ENCODE measurements at regions of chr11 and their contacts with region 1.

Region 1: GRCh38 chr11:6443269-6444003 is 2.6 kb upstream of the HPX start:
- DNase-seq: peak; percentile 66
- H3K4me3 Mint-ChIP-seq: no peak overlapping the region
- H3K27ac Mint-ChIP-seq: no peak overlapping the region
- H3K4me1 Mint-ChIP-seq: no peaks in the 10 kb centered on the region
- H3K27me3 Mint-ChIP-seq: no peaks in the 10 kb centered on the region

Region 2: DNA sequence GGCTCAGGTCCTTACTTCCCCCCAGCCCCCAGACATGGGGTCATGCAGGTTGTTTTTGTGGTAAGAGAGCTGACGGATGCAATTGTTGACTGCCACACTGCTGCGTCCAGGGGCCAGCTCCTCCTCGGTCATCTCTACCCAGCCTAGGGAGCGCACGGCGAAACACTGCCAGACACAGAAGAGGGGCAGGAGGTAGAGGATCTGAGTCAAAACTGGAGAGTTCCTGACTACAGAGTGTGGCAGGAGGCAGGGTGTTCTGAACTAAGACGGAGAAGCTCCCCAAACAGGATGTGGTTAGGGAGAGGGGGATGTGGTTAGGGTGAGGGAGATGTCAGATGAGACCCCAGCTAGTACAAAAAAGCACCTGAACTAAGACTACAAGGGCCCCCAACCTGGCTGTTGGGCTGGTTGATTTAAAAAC is 40.9 kb before region 1 on chr11:
- CTCF ChIA-PET with region 1: interaction called, 18 read pairs
- POLR2A ChIA-PET with region 1: no interaction called
- intact Hi-C with region 1: loop called (anchors 1 kb)
- DNase-seq: peak; percentile 88
- H3K4me3 Mint-ChIP-seq: peak overlapping the region; percentile 55
- H3K27ac Mint-ChIP-seq: peak overlapping the region; percentile 90
- H3K4me1 Mint-ChIP-seq: peaks cover 71% of the 10 kb centered on the region
- H3K27me3 Mint-ChIP-seq: no peaks in the 10 kb centered on the region

Region 3: GRCh38 chr11:6419009-6419631 is 24.3 kb before region 1 on chr11 and contains the start of gene APBB1:
- CTCF ChIA-PET with region 1: interaction called, 15 read pairs
- POLR2A ChIA-PET with region 1: no interaction called
- intact Hi-C with region 1: loop called (anchors 1 kb)
- DNase-seq: peak; percentile 78
- H3K4me3 Mint-ChIP-seq: peak within 1 kb of the TSS; percentile 73
- H3K27ac Mint-ChIP-seq: peak within 1 kb of the TSS; percentile 61
- H3K4me1 Mint-ChIP-seq: peaks cover 8% of the 10 kb centered on the region
- H3K27me3 Mint-ChIP-seq: peaks cover 5% of the 10 kb centered on the region
- total RNA-seq, gene APBB1: 51.6 to 55.3 TPM

Region 4: DNA sequence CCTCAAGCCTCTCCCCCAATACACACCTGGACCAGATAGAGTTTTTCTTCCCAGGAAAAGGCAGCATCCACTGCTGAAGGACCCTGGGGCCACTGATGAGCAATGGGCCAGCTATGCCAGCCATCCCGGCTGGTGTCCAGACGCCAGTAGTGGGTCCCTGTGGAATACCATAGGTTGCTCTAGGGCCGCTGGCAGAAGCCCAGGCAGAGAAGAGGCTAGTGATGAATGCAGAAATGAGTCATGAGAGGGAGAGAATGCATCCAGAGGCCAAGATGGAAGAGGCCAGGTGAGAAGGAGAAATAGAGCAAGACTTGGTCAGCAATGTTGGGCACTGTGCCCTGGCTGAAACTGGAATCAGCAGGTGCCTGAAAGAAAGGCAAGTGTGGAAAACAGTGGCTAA is 11.6 kb before region 1 on chr11:
- CTCF ChIA-PET with region 1: interaction called, 17 read pairs
- POLR2A ChIA-PET with region 1: interaction called, 4 read pairs
- intact Hi-C with region 1: no loop called
- DNase-seq: no peak
- H3K4me3 Mint-ChIP-seq: no peak overlapping the region
- H3K27ac Mint-ChIP-seq: no peak overlapping the region
- H3K4me1 Mint-ChIP-seq: no peaks in the 10 kb centered on the region
- H3K27me3 Mint-ChIP-seq: no peaks in the 10 kb centered on the region

Region 5: GRCh38 chr11:6473481-6474422 is 30.3 kb after region 1 on chr11 and contains the start of gene TRIM3:
- CTCF ChIA-PET with region 1: interaction called, 8 read pairs
- POLR2A ChIA-PET with region 1: interaction called, 3 read pairs
- intact Hi-C with region 1: loop called (anchors 5 kb)
- DNase-seq: peak; percentile 75
- H3K4me3 Mint-ChIP-seq: peak within 1 kb of the TSS; percentile 80
- H3K27ac Mint-ChIP-seq: peak within 1 kb of the TSS; percentile 31
- H3K4me1 Mint-ChIP-seq: peaks cover 24% of the 10 kb centered on the region
- H3K27me3 Mint-ChIP-seq: no peaks in the 10 kb centered on the region
- total RNA-seq, gene TRIM3: 6.4 to 8.0 TPM

Region 6: GRCh38 chr11:6505577-6506240 is 62.3 kb after region 1 on chr11:
- CTCF ChIA-PET with region 1: interaction called, 5 read pairs
- POLR2A ChIA-PET with region 1: no interaction called
- intact Hi-C with region 1: loop called (anchors 2 kb)
- DNase-seq: no peak
- H3K4me3 Mint-ChIP-seq: no peak overlapping the region
- H3K27ac Mint-ChIP-seq: no peak overlapping the region
- H3K4me1 Mint-ChIP-seq: peaks cover 1% of the 10 kb centered on the region
- H3K27me3 Mint-ChIP-seq: no peaks in the 10 kb centered on the region

Region 7: DNA sequence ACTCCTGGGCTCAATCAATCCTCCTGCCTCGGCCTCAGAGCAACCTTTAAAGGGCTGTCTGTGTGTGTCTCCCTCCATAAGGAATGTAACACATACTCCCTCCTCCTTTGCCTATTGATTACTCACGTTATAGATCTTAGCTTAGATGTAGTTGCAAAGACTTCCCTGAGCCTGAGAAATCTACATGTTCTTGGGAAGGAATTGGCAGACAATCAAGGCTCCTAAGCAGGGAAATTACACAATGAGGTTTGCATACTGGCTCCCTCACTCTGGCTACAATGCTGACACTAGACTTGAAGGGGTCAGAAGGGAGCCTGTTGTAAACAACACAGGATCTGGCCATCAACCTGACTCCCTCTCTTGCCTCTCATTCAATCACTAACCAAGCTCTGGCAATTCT is 1036.7 kb after region 1 on chr11:
- CTCF ChIA-PET with region 1: no interaction called
- POLR2A ChIA-PET with region 1: no interaction called
- intact Hi-C with region 1: no loop called
- DNase-seq: no peak
- H3K4me3 Mint-ChIP-seq: no peak overlapping the region
- H3K27ac Mint-ChIP-seq: no peak overlapping the region
- H3K4me1 Mint-ChIP-seq: no peaks in the 10 kb centered on the region
- H3K27me3 Mint-ChIP-seq: no peaks in the 10 kb centered on the region